ENCODE measurements at regions of chr3 and their contacts with region 1.

Region 1: DNA sequence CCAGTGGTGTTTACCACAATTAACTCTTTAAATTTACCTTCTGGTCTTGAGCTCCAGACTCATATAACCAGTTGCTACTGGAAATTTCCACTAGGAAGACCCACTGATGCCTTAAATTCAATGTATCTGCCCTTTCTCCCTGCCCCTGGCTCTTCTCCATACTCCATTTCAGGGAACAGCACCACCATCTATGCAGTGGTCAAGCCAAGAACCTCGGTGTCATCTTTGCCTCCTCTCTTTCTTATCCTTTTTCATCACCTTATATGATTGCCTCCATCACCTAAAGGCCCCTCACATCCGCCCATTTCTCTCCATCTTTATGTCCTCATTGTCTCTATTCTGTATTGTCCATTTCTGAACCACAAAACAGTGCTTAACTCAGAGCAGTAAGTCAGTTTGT is 20.7 kb upstream of the MFSD1 start:
- DNase-seq: no peak

Region 2: DNA sequence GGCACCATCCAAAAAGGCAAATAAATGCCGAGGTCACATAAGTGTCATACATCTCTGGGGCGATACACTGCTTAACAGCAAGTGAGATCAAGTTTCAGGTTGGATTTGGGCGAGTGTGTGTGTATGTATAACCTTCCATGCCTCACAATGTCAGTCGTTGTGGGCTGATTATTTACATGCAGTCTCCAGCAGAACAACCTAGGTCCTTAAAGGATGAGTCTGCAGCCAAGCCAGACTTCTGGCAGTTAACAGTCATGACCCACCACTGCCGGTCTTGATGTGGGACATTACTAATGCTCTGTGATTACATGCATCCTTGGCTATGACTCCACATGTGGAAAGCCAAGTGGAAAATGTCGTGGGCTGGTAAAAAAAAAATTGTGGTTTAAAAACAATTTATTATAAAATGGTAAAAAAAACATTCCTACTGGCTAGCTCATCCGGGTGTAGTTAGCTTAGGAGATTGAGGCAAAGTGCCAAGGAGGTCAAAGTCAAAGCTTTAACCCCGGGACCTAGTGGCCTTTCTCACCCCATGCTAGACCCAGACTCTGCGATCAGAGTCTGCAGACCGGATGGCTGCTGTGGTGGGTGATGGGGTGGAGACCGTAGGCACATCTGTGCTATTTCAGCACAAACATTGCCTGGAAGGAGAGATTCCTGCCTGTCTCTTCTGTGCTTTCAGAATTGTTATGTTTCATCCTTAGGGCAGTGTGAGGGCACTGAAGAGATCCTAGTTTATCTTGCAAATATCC is 55.8 kb before region 1 on chr3:
- intact Hi-C with region 1: loop called (anchors 2 to 5 kb)
- DNase-seq: peak; percentile 86

Region 3: DNA sequence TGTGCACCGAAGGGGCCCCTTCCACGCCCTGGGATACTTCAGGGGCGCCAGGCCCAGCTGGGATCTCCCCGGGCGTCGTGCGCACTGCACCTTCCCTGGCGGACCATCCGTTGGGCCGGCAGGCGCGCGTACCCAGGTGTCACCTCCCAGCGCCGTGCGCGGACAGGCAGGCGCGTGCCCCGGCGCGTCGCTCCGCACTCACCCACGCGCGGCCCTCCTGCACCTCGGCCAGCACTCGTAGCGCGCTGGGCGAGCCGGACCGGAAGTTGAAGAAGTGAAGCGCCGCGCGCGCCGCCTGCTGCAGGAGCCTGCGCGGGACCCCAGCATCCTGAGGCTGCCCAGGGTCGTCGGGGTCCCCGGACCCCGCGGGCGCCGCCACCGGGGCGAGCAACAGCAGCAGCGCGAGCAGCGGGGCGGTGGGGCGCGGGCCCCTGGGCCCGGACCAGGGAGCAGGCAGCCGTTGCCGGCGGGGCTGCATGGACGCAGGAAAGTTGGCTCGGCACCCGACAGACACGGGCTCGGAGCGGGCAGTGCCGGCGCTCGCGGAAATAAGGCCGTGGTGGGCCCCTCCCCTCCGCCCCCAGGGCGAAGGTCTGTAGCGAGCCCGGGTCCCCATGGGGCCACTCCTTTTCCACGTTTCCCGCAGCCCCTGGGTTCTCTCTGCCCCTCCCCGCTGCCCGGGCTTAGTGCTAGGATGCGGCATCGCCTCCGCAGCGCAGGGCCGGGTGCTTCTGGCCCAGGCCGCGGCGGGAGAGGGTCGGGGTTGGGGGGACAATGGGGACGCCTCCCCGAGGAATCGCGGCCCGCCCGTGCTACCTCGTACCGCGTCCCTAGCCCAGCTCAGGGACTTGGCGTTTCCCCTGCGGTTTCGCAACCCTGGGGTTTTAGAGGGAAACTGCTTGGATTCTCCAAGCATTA is 49.0 kb before region 1 on chr3 and contains the start of gene RARRES1:
- intact Hi-C with region 1: loop called in 1 of 2 experiments (anchors 5 kb)
- DNase-seq: peak; percentile 93
- total RNA-seq, gene RARRES1: 424 to 446 TPM